Posterior vena cava (tissue), 2 donors: ENCODE measurements at regions of chrX and their contacts with region 1.

Region 1: DNA sequence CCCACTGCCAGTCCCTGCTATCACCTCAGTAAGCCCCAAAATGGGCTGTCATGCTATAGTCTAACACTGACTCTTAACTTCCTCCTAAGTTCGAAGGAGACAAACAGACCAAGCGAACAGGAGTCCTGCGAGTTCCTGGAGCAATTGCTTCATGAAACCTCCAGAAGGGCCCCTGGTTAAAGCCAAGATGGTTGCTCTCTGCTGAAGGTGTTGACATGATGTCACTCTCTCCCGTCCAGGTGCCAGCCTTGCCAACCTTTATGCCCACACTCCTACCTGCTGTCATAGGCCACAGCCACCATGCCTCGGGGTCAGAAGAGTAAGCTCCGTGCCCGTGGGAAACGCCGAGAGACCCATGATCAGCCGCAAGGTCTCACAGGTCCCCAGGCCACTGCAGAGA is at the start of gene MAGEB6B:
- DNase-seq: no peak
- total RNA-seq, gene MAGEB6B: not detected

Region 2: DNA sequence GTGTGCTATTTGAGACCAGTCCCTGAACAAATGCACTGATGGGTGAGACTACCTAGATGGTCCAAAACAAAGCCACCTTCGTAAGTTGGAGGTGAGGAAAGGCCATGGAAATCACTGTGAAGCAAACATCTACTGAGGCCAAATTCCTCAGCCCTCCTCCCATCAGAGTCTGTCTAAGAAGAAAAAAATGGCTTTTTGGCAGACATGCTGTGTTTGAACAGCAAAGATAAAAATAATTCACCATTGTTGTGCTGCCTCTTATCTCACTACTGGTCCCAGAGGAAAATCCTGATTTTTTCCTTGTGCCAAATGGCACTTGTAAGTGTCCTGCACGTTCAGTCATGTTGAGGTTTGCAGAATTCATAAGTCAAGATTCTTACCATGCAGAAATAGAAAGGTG is 14.3 kb before region 1 on chrX:
- intact Hi-C with region 1: loop called in 1 of 2 experiments (anchors 1 kb)
- DNase-seq: no peak